PC-9 (cell line): ENCODE measurements at regions of chr9 and their contacts with region 1.

Region 1: GRCh38 chr9:83744212-83744611 is 36.5 kb upstream of the UBQLN1 start:
- DNase-seq: peak in 1 of 2 experiments; percentile 5
- H3K4me3 ChIP-seq: no peak overlapping the region
- H3K27ac ChIP-seq: no peak overlapping the region
- H3K4me1 ChIP-seq: 0 out of 2 replicates have a peak, but pooled peaks cover 8% of the 10 kb centered on the region
- H3K27me3 ChIP-seq: no peaks in the 10 kb centered on the region
- CTCF ChIP-seq: no peak

Region 2: DNA sequence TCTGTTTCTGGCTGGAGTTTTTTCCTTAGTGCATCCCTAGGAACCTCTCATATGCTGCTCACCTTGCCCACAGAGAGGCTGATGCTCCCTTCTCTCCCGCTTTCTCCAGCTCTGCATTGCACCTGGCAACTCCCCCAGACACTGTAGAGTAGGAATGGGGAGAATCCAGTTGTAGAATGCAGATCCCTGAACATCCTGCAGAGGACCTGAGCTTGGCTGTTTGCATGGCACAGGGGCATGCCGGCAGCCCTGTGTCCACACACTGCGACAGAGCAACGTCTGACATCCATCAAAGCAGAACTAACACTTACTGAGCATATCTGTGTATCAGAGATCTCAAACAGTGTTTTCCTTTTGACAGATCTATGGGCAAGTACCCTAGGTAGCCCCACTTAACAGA is 101.4 kb before region 1 on chr9:
- CTCF ChIA-PET with region 1: no interaction called
- POLR2A ChIA-PET with region 1: no interaction called
- intact Hi-C with region 1: no loop called
- DNase-seq: no peak
- H3K4me3 ChIP-seq: no peak overlapping the region
- H3K27ac ChIP-seq: no peak overlapping the region
- H3K4me1 ChIP-seq: no peaks in the 10 kb centered on the region
- H3K27me3 ChIP-seq: no peaks in the 10 kb centered on the region
- CTCF ChIP-seq: no peak

Region 3: DNA sequence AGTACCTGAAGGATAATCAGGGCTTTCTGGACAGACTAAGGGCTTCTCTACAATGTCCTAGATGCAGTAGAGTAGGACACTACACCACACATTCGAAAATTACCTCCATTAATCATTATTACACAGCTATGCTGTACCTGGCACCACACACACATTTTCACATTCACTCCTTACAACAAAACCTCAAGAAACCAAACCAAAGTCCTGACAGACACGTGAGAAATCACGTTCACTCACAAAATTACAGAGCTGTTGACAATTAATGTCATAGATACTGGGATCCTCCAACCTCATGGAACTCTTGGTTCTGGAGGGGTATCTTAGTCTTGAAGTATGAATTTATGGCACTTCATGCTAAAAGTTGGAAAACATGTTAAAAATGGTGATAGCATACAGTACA is 52.7 kb before region 1 on chr9:
- CTCF ChIA-PET with region 1: no interaction called
- POLR2A ChIA-PET with region 1: no interaction called
- intact Hi-C with region 1: no loop called
- DNase-seq: peak in 1 of 2 experiments; percentile 20
- H3K4me3 ChIP-seq: no peak overlapping the region
- H3K27ac ChIP-seq: no peak overlapping the region
- H3K4me1 ChIP-seq: no peaks in the 10 kb centered on the region
- H3K27me3 ChIP-seq: no peaks in the 10 kb centered on the region
- CTCF ChIP-seq: no peak

Region 4: DNA sequence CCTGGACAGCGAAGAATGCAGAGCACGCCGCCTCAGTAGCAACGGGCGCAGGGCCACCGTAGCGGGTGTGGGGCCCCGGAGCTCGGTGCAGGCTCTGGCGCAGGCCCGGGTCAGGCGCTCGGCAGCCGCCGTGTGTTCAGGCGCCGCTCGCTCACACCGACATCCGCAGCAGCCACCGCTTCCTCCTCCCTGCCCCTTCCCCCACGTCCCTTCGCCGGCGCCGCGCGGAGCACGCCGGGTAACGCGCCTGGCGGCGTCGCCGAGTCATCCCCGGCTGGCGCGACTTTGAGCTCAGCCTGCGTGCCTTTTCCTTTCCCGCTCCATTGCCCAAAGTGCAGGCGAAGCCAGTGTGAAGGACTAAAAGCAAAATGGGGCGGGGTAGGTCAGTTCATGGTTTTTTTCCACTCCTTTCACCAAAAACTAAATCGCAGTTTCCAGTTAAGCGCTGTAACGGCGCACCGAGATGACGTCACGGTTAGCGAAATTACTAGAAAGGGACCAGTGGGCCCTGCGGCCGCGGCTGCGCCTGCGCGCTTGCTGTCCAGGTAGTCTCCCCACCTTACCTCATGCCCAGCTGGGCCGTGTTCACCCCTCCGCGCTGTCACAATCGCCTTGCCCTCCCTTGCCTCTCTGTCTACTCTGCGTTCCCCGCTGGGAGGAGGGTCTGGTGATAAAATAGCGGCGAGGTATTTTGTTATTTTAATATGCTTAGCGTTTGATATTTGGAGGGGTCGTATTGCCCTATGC is 36.3 kb before region 1 on chr9 and contains the start of gene UBQLN1:
- CTCF ChIA-PET with region 1: no interaction called
- POLR2A ChIA-PET with region 1: interaction called, 15 read pairs
- intact Hi-C with region 1: no loop called
- DNase-seq: peak; percentile 73 to 89
- H3K4me3 ChIP-seq: peak within 1 kb of the TSS; percentile 93
- H3K27ac ChIP-seq: peak within 1 kb of the TSS; percentile 95
- H3K4me1 ChIP-seq: peaks cover 15% of the 10 kb centered on the region
- H3K27me3 ChIP-seq: no peaks in the 10 kb centered on the region
- CTCF ChIP-seq: no peak
- total RNA-seq, gene UBQLN1: 118 and 129 TPM in 2 replicates